ENCODE measurements at regions of chr1 and their contacts with region 1.

Region 1: GRCh38 chr1:153790966-153791647 is 15.9 kb downstream of the SLC27A3 start:
- DNase-seq: no peak
- H3K4me3 ChIP-seq: peak overlapping the region in 1 of 2 donors; percentile 16
- H3K27ac ChIP-seq: peak overlapping the region; percentile 82
- H3K4me1 ChIP-seq: no peaks in the 10 kb centered on the region
- H3K27me3 ChIP-seq: no peaks in the 10 kb centered on the region
- CTCF ChIP-seq: no peak
- POLR2A ChIP-seq: no peak

Region 2: GRCh38 chr1:153922972-153923925 is 132.1 kb after region 1 on chr1 and contains the start of gene GATAD2B:
- intact Hi-C with region 1: loop called (anchors 2 kb)
- DNase-seq: peak; percentile 100
- H3K4me3 ChIP-seq: peak within 1 kb of the TSS; percentile 71 to 91
- H3K27ac ChIP-seq: peak within 1 kb of the TSS; percentile 88 to 95
- H3K4me1 ChIP-seq: peaks cover 16% of the 10 kb centered on the region
- H3K27me3 ChIP-seq: no peaks in the 10 kb centered on the region
- CTCF ChIP-seq: peak in 1 of 4 experiments; percentile 5
- POLR2A ChIP-seq: peak; percentile 59
- total RNA-seq, gene GATAD2B: 24.5 to 29.7 TPM